Activated T-helper 1 cell treated with anti-CD3 and anti-CD28 coated beads, Interleukin-12 subunit alpha, Interleukin-12 subunit beta, Interleukin-2, Interleukin-4 antibody, amounts not matched to agents 30 ng/mL and 10 ng/mL and 1 ng/mL, durations not matched to agents 14 hours and 24 hours and 36 hours (primary cell): ENCODE measurements at regions of chr1 and their contacts with region 1.

Region 1: GRCh38 chr1:65209005-65209885 is 61.2 kb downstream of the AK4 start:
- DNase-seq: no peak
- H3K4me3 Mint-ChIP-seq: no peak overlapping the region
- H3K27ac Mint-ChIP-seq: peak overlapping the region; percentile 20
- H3K4me1 Mint-ChIP-seq: peaks cover 76% of the 10 kb centered on the region
- H3K27me3 Mint-ChIP-seq: no peaks in the 10 kb centered on the region

Region 2: DNA sequence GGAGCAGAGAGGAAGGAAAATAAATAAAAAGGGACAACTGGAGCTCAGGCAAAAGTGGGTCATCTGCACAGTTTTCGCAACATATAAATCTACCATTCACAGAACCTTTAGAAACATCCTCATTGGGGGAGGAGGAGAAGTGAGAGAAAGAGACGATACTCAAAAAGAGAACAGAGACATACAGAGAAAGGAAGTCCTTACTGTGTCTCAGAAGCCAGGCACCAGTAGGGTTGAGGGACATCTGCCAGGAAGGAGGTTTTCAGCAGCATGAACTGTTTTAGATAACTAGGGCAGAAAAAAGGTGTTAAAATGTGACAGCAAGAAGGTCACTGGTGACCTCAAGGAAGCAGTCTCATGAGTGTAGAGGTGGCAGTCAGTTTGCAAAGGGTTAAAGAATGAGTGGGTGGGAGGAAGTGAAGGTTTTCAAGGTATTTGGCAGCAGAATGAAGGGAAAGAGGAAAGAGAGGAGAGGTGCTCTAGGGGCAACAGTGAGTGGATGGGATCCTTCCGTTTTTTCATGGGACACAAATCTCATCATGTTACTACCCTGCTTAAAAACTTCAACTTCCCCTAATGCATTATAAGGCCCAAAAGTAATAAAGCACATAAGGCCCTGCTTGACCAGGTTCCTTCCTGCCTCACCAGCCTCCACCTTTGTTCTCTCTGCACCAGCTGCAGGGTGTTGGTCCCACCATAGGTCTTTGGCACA is 252.4 kb before region 1 on chr1:
- intact Hi-C with region 1: loop called (anchors 5 kb)
- DNase-seq: peak; percentile 14
- H3K4me3 Mint-ChIP-seq: no peak overlapping the region
- H3K27ac Mint-ChIP-seq: no peak overlapping the region
- H3K4me1 Mint-ChIP-seq: peaks cover 63% of the 10 kb centered on the region
- H3K27me3 Mint-ChIP-seq: no peaks in the 10 kb centered on the region

Region 3: GRCh38 chr1:65067491-65068201 is 141.6 kb before region 1 on chr1:
- intact Hi-C with region 1: loop called (anchors 2 kb)
- DNase-seq: peak; percentile 25
- H3K4me3 Mint-ChIP-seq: peak overlapping the region; percentile 89
- H3K27ac Mint-ChIP-seq: peak overlapping the region; percentile 95
- H3K4me1 Mint-ChIP-seq: peaks cover 41% of the 10 kb centered on the region
- H3K27me3 Mint-ChIP-seq: no peaks in the 10 kb centered on the region

Region 4: DNA sequence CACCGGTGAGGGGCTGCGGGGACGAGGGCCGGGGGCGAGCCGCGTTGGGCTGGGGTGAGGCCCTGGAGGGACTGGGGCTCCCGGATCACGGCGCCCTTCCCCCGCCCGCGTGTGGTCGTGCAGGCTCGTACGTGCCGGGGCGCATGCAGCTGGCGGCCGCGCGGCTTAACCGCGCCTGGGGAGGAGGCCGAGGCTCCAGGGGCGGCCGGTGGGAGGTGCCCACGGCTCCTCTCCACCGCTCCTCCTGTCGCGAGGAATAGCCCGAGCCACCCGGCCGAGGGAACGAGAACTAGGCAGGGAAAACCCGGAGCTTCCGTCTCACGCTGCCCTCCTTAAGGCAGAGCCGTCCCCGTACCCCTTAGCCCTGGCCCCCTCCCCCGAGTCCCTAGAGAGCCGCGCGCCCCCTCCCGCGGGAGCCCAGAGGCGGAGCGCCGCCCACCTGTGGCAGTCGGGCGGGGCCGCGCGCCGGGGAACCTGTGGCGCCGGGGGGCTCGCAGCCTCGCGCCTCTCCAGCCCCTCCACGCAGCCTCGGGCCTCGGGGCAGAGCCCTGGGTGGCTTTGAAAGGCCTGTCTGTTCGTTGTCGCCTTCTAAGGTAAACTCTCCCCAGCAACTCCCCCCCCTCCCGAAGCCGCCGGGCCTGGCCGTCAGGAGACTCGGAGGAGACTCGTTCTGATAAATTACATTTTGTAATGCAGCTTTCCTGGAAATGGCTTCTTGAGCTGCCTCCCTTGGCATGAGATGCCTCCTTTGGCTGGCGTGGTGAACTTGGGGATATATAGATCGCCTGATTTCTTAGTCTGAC is 60.5 kb before region 1 on chr1:
- intact Hi-C with region 1: loop called (anchors 1 kb)
- DNase-seq: peak; percentile 55
- H3K4me3 Mint-ChIP-seq: peak overlapping the region; percentile 94
- H3K27ac Mint-ChIP-seq: peak overlapping the region; percentile 90
- H3K4me1 Mint-ChIP-seq: peaks cover 52% of the 10 kb centered on the region
- H3K27me3 Mint-ChIP-seq: peaks cover 7% of the 10 kb centered on the region

Region 5: GRCh38 chr1:65230731-65231481 is 21.7 kb after region 1 on chr1:
- intact Hi-C with region 1: loop called (anchors 1 kb)
- DNase-seq: no peak
- H3K4me3 Mint-ChIP-seq: no peak overlapping the region
- H3K27ac Mint-ChIP-seq: peak overlapping the region; percentile 81
- H3K4me1 Mint-ChIP-seq: peaks cover 32% of the 10 kb centered on the region
- H3K27me3 Mint-ChIP-seq: no peaks in the 10 kb centered on the region

Region 6: GRCh38 chr1:65419681-65420589 is 210.7 kb after region 1 on chr1:
- intact Hi-C with region 1: loop called (anchors 2 kb)
- DNase-seq: peak; percentile 98
- H3K4me3 Mint-ChIP-seq: no peak overlapping the region
- H3K27ac Mint-ChIP-seq: peak overlapping the region; percentile 90
- H3K4me1 Mint-ChIP-seq: peaks cover 32% of the 10 kb centered on the region
- H3K27me3 Mint-ChIP-seq: peaks cover 5% of the 10 kb centered on the region

Region 7: GRCh38 chr1:65734979-65735378 is 525.7 kb after region 1 on chr1:
- intact Hi-C with region 1: no loop called
- DNase-seq: no peak
- H3K4me3 Mint-ChIP-seq: no peak overlapping the region
- H3K27ac Mint-ChIP-seq: no peak overlapping the region
- H3K4me1 Mint-ChIP-seq: no peaks in the 10 kb centered on the region
- H3K27me3 Mint-ChIP-seq: peaks cover 6% of the 10 kb centered on the region